Posterior vena cava (tissue), 2 donors: ENCODE measurements at regions of chr14 and their contacts with region 1.

Region 1: GRCh38 chr14:99628832-99629618 is 15.9 kb upstream of the HHIPL1 start:
- DNase-seq: peak; percentile 93

Region 2: GRCh38 chr14:99518441-99519346 is 110.3 kb before region 1 on chr14:
- intact Hi-C with region 1: loop called (anchors 2 to 5 kb)
- DNase-seq: peak; percentile 92

Region 3: DNA sequence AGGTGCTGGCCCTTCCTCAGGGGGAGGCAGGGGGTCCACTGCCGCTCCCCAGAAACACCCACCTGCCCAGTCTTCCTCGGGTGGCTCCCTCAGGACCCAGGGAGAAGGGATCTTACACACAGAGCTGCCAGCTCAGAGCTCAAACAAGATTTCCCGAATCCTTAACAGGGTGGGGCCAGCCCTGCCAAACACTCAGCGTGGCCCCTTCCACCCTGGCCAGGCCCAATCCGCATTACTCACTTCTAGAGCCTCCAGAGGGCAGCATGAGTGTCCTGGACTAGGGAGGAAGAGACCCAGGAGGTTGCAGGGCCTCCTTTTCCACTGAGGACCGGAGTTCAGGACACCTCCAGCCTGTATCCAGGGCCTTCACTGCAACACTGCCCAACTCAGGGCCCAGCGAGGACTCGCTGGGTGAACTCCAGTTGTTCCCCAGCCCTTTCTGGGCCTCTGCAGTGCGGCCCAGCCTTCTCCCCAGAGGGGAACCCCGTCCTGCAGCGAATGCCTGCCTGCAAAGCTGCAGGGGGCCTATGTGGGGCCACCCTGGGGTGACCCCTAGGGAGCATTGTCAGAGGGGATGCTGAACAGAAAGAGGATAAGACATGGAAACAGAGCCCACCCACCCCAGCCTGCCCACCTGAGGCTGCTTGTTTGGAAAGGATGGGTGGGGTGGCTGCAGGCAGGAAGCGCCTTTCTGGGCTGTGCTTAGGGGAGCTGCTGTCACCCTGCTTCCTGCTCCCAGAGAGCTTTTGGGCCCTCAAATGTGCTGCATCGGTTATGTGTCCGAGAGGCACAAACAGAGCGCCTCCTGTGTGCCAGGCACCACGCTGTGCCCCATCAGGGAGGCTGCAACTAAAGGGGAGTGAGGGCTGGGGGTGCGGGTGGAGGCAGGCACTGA is 104.0 kb before region 1 on chr14:
- intact Hi-C with region 1: loop called in 1 of 2 experiments (anchors 5 kb)
- DNase-seq: no peak

Region 4: DNA sequence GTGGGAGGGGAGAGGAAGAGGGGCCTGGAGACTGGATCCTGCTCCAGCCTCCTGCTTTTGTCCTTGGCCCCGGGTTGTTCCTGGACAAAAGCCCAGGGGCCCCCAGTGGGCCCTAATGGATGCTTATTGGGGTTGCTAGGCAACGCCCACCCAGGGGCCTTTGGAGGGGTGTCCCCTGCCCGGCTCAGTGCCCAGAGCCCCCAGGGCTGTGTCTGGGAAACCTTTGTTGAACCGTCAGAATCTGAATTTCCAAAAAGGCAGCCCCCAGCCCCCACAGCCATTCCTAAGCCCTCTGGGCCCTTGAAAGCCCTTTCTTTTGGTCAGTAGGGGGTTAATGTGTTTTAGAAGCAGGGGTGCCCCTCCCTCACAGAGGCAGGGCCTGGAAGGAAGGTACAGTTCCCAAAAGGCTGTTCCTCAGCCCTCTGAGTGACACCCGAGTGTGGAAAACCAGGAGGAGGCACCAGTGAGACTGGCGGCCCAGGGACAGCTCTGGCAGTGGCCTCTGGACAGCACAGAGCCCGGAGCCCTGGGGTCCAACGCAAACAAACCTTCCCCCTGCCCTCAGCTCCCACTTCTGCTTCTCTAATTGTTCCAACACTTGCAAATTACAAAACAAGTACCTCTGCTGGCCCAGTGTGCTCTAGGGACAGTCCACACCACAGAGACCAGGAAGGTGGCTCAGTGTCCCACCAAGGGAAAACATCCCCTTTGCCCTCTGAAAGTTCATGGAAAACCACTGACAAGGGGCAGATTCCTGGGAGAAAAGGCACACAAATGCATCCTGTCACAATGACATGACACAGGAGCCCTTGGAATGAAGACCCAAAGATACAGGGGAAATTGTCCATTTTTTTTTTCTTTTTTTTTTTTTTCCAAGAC is 35.3 kb after region 1 on chr14:
- intact Hi-C with region 1: no loop called
- DNase-seq: no peak

Region 5: GRCh38 chr14:99774556-99775307 is 145.7 kb after region 1 on chr14:
- intact Hi-C with region 1: no loop called
- DNase-seq: no peak